ENCODE measurements at regions of chr6 and their contacts with region 1.

Region 1: DNA sequence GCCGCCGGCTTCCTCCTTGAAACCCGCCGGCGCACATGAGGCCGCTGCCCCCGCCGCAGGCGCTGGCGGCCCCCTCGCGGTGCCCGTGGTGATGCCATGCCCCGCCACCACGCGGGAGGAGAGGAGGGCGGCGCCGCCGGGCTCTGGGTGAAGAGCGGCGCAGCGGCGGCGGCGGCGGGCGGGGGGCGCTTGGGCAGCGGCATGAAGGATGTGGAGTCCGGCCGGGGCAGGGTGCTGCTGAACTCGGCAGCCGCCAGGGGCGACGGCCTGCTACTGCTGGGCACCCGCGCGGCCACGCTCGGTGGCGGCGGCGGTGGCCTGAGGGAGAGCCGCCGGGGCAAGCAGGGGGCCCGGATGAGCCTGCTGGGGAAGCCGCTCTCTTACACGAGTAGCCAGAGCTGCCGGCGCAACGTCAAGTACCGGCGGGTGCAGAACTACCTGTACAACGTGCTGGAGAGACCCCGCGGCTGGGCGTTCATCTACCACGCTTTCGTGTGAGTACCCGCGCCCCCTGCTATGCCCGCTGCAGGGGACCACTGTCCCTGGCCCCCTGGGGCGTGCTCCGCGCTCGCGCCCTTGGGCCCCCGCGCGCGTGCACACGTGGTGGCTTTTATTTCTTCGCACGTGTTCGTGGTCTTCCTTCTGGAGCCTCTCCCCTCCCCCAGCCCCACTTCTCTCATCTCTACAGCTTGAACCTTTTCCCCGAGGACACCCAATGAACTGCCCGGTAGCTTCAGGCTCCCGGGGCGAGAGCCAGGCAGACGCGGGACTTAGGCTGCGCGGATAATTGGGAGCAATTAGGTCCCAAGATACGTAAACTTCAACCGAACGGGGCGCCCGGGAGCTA is 453 bp downstream of the KCNQ5 start:
- DNase-seq: peak; percentile 85
- ATAC-seq: peak; percentile 60
- H3K4me3 ChIP-seq: peak overlapping the region; percentile 65 to 89 (median 69)
- H3K4me3 Mint-ChIP-seq: peak overlapping the region; percentile 96
- H3K27ac ChIP-seq: peak overlapping the region; percentile 45 to 67
- H3K27ac Mint-ChIP-seq: peak overlapping the region; percentile 89
- H3K4me1 ChIP-seq: peaks cover 33 to 34% of the 10 kb centered on the region in 2 donors
- H3K4me1 Mint-ChIP-seq: peaks cover 50% of the 10 kb centered on the region
- H3K27me3 ChIP-seq: no peaks in the 10 kb centered on the region
- H3K27me3 Mint-ChIP-seq: no peaks in the 10 kb centered on the region
- CTCF ChIP-seq: peak; percentile 35

Region 2: GRCh38 chr6:70667711-70668498 is 1954.4 kb before region 1 on chr6 and contains the start of gene SMAP1:
- CTCF ChIA-PET with region 1: no interaction called
- POLR2A ChIA-PET with region 1: no interaction called
- intact Hi-C with region 1: loop called (anchors 5 kb)
- DNase-seq: peak; percentile 95
- ATAC-seq: peak; percentile 97
- H3K4me3 ChIP-seq: peak within 1 kb of the TSS; percentile 69 to 92 (median 82)
- H3K4me3 Mint-ChIP-seq: peak within 1 kb of the TSS; percentile 90
- H3K27ac ChIP-seq: peak within 1 kb of the TSS; percentile 60 to 83
- H3K27ac Mint-ChIP-seq: peak within 1 kb of the TSS; percentile 93
- H3K4me1 ChIP-seq: peaks cover 17 to 23% of the 10 kb centered on the region in 2 donors
- H3K4me1 Mint-ChIP-seq: peaks cover 37% of the 10 kb centered on the region
- H3K27me3 ChIP-seq: no peaks in the 10 kb centered on the region
- H3K27me3 Mint-ChIP-seq: peaks cover 6% of the 10 kb centered on the region
- CTCF ChIP-seq: no peak
- total RNA-seq, gene SMAP1: 19.7 and 21.7 TPM in 2 replicates

Region 3: GRCh38 chr6:72580281-72580940 is 41.9 kb before region 1 on chr6:
- CTCF ChIA-PET with region 1: no interaction called
- POLR2A ChIA-PET with region 1: no interaction called
- intact Hi-C with region 1: no loop called
- DNase-seq: peak; percentile 8
- ATAC-seq: no peak
- H3K4me3 ChIP-seq: no peak overlapping the region
- H3K4me3 Mint-ChIP-seq: no peak overlapping the region
- H3K27ac ChIP-seq: no peak overlapping the region
- H3K27ac Mint-ChIP-seq: no peak overlapping the region
- H3K4me1 ChIP-seq: no peaks in the 10 kb centered on the region
- H3K4me1 Mint-ChIP-seq: no peaks in the 10 kb centered on the region
- H3K27me3 ChIP-seq: no peaks in the 10 kb centered on the region
- H3K27me3 Mint-ChIP-seq: peaks cover 4% of the 10 kb centered on the region
- CTCF ChIP-seq: no peak

Region 4: GRCh38 chr6:72654071-72654621 is 31.8 kb after region 1 on chr6:
- CTCF ChIA-PET with region 1: interaction called, 10 read pairs
- POLR2A ChIA-PET with region 1: no interaction called
- intact Hi-C with region 1: loop called (anchors 2 kb)
- DNase-seq: peak; percentile 22
- ATAC-seq: peak; percentile 39
- H3K4me3 ChIP-seq: no peak overlapping the region
- H3K4me3 Mint-ChIP-seq: no peak overlapping the region
- H3K27ac ChIP-seq: no peak overlapping the region
- H3K27ac Mint-ChIP-seq: no peak overlapping the region
- H3K4me1 ChIP-seq: peaks cover 6 to 21% of the 10 kb centered on the region in 2 donors
- H3K4me1 Mint-ChIP-seq: peaks cover 34% of the 10 kb centered on the region
- H3K27me3 ChIP-seq: no peaks in the 10 kb centered on the region
- H3K27me3 Mint-ChIP-seq: no peaks in the 10 kb centered on the region
- CTCF ChIP-seq: no peak

Region 5: DNA sequence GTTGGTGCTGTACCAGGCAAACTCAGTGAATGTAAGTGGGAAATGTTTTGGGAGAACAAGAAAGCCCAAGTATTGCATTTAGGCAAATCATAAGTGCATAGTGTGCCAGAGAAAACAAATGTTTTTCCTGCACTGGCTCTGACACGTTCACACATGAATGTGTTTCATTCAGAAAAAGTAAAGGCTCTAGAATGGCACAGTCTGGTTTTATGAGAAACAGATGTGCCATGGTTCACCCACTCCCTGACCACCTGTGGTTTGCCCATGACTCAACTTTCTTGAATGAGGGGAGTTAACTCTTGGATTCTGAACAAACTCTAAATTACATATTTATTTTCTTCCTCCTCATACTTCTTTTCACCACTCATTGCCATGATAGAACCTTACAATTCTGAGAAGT is 126.4 kb after region 1 on chr6:
- CTCF ChIA-PET with region 1: no interaction called
- POLR2A ChIA-PET with region 1: no interaction called
- intact Hi-C with region 1: loop called (anchors 5 kb)
- DNase-seq: no peak
- ATAC-seq: no peak
- H3K4me3 ChIP-seq: no peak overlapping the region
- H3K4me3 Mint-ChIP-seq: no peak overlapping the region
- H3K27ac ChIP-seq: no peak overlapping the region
- H3K27ac Mint-ChIP-seq: no peak overlapping the region
- H3K4me1 ChIP-seq: no peaks in the 10 kb centered on the region
- H3K4me1 Mint-ChIP-seq: peaks cover 2% of the 10 kb centered on the region
- H3K27me3 ChIP-seq: no peaks in the 10 kb centered on the region
- H3K27me3 Mint-ChIP-seq: no peaks in the 10 kb centered on the region
- CTCF ChIP-seq: no peak

Region 6: DNA sequence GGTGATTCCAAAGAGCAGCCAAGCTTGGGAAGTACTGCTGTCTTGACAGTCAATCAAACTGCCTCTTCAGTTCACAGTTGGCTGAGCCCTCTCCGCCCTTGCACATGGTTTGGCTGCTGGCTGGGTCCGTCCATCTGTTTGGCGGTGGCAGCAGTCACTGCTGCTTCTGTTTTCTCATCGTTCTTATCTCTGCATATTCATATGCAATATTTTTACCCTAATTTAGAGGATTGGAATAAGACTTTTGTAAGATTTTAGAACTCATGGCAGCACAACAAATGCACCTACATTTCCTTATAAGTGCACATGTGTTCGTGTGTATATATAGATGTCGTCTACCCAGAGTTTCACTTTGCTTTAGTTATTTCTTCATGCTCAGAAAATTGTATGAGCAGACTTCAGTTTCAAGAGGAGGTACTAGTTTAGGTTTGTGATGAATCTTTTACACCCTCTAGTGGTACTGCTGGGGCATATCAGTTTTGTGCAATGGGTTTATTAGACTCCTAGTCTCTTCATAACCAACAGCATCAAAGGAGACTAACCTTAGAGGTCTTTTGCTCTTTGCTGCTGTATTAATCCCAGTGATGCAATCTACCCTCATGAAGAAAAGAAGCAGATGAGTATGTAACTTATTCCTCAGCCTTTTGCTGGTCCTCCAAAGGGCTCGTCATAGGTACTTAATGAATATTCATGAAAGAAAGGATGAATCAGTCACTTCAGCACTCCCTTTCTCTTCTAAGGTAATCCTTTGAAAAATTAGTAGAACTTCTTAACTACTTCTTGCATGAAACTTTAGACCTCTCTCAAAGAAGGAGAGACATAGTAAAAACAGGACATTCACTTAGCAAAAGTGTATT is 558.7 kb after region 1 on chr6:
- CTCF ChIA-PET with region 1: interaction called, 53 read pairs
- POLR2A ChIA-PET with region 1: no interaction called
- intact Hi-C with region 1: loop called (anchors 1 kb)
- DNase-seq: peak; percentile 76
- ATAC-seq: peak; percentile 90
- H3K4me3 ChIP-seq: peak overlapping the region in 4 of 5 experiments; percentile 11 to 54 (median 46)
- H3K4me3 Mint-ChIP-seq: peak overlapping the region; percentile 88
- H3K27ac ChIP-seq: no peak overlapping the region
- H3K27ac Mint-ChIP-seq: peak overlapping the region; percentile 43
- H3K4me1 ChIP-seq: peaks cover 23 to 25% of the 10 kb centered on the region in 2 donors
- H3K4me1 Mint-ChIP-seq: peaks cover 12% of the 10 kb centered on the region
- H3K27me3 ChIP-seq: no peaks in the 10 kb centered on the region
- H3K27me3 Mint-ChIP-seq: no peaks in the 10 kb centered on the region
- CTCF ChIP-seq: peak; percentile 95

Region 7: DNA sequence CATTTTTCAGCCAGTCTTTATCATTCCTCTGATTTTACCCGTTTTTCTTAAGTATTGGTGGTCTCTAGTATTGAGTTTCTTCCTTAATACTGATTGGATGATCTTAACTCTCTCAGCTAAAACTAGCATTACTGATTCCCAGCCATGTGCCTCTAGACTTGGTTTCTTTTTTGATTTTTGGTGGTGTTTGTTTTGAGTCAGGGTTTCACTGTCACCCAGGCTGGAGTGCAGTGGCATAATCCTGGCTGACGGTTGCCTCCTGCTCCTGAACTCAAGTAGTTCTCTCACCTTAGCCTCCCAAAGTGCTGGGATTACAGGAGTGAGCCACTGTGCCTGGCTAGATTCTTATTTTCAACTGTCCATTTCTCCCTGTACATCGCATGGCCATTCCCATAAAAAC is 706.9 kb after region 1 on chr6:
- CTCF ChIA-PET with region 1: interaction called, 28 read pairs
- POLR2A ChIA-PET with region 1: no interaction called
- intact Hi-C with region 1: no loop called
- DNase-seq: no peak
- ATAC-seq: no peak
- H3K4me3 ChIP-seq: no peak overlapping the region
- H3K4me3 Mint-ChIP-seq: no peak overlapping the region
- H3K27ac ChIP-seq: no peak overlapping the region
- H3K27ac Mint-ChIP-seq: no peak overlapping the region
- H3K4me1 ChIP-seq: no peaks in the 10 kb centered on the region
- H3K4me1 Mint-ChIP-seq: no peaks in the 10 kb centered on the region
- H3K27me3 ChIP-seq: peaks cover 0 to 6% (median 0%) of the 10 kb centered on the region in 4 experiments
- H3K27me3 Mint-ChIP-seq: peaks cover 39% of the 10 kb centered on the region
- CTCF ChIP-seq: no peak